SK-N-SH (cell line): ENCODE measurements at regions of chr4 and their contacts with region 1.

Region 1: DNA sequence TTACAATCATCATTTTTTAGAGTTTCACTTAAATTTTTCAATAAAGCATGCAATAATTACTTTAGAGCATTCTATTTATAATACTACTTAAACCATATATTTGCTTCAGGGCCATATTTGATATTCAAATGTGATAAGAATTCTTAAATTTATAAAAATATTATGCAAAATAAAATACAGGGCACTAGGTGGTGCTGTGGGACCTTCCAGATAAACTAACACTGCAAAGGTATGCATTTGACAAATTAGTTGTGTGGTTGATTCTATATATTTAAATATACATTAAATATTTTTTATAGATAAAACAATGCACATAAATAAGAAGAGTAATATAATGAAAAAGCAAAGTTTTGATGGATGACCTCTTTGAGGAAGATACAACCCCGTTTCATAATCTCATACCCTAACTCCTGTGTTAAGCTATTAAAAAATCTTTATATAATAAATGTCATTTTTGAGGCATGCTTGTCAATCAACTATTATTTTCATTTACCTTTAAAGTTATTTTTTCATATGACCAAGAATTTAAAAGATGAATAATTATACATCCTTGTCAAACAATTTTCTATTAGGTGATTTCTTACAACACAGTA is 128.4 kb downstream of the REELD1 start:
- DNase-seq: peak; percentile 32
- H3K4me3 ChIP-seq: no peak overlapping the region
- H3K27ac ChIP-seq: no peak overlapping the region
- H3K4me1 ChIP-seq: peaks cover 0 to 43% of the 10 kb centered on the region in 2 experiments; a peak in 2 of 4 replicates
- H3K27me3 ChIP-seq: no peaks in the 10 kb centered on the region
- CTCF ChIP-seq: peak; percentile 68
- EP300 ChIP-seq: no peak
- RAD21 ChIP-seq: peak; percentile 83

Region 2: GRCh38 chr4:146310319-146311021 is 32.2 kb before region 1 on chr4:
- CTCF ChIA-PET with region 1: interaction called, 11 read pairs
- POLR2A ChIA-PET with region 1: no interaction called
- DNase-seq: no peak
- H3K4me3 ChIP-seq: no peak overlapping the region
- H3K27ac ChIP-seq: peak overlapping the region in 1 of 2 experiments; percentile 88; a peak in 2 of 4 replicates
- H3K4me1 ChIP-seq: peaks cover 9 to 14% of the 10 kb centered on the region in 2 experiments; a peak in 3 of 4 replicates
- H3K27me3 ChIP-seq: no peaks in the 10 kb centered on the region
- CTCF ChIP-seq: no peak
- EP300 ChIP-seq: no peak
- RAD21 ChIP-seq: no peak

Region 3: DNA sequence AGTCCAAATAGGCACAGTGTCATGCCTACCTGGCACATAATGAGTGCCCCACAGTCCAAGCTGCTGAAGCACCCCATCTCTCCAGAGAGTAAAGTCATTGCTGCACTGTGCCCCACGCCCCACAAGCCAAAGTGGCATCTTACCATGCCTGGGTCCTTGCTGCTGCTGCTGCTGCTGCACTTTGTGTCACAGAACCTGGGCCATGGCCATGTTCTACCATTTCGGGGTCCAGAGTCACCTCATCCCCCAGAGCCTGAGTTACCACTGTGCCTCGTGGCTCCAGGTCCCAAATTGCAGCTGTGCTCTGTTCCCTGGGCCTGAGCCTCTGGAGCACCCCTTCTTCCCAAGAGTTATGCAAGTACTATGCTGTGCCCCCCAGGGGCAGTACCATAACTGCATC is 138.6 kb after region 1 on chr4:
- CTCF ChIA-PET with region 1: no interaction called
- POLR2A ChIA-PET with region 1: no interaction called
- DNase-seq: no peak
- H3K4me3 ChIP-seq: no peak overlapping the region
- H3K27ac ChIP-seq: no peak overlapping the region
- H3K4me1 ChIP-seq: peaks cover 0 to 8% of the 10 kb centered on the region in 2 experiments; a peak in 3 of 4 replicates
- H3K27me3 ChIP-seq: no peaks in the 10 kb centered on the region
- CTCF ChIP-seq: no peak
- EP300 ChIP-seq: no peak
- RAD21 ChIP-seq: no peak

Region 4: GRCh38 chr4:146916479-146917076 is 573.9 kb after region 1 on chr4:
- CTCF ChIA-PET with region 1: interaction called, 44 read pairs
- POLR2A ChIA-PET with region 1: no interaction called
- DNase-seq: peak; percentile 7
- H3K4me3 ChIP-seq: peak overlapping the region in 1 of 2 experiments; percentile 14; a peak in 1 of 4 replicates
- H3K27ac ChIP-seq: no peak overlapping the region
- H3K4me1 ChIP-seq: no peaks in the 10 kb centered on the region
- H3K27me3 ChIP-seq: no peaks in the 10 kb centered on the region
- CTCF ChIP-seq: peak; percentile 95
- EP300 ChIP-seq: no peak
- RAD21 ChIP-seq: peak; percentile 85